Left ventricle myocardium inferior (tissue), 1 donor: ENCODE measurements at regions of chr19 and their contacts with region 1.

Region 1: GRCh38 chr19:39843919-39844793 is 2.0 kb downstream of the FBL start:
- DNase-seq: no peak
- H3K4me3 ChIP-seq: peak overlapping the region; percentile 95
- H3K27ac ChIP-seq: no peak overlapping the region
- H3K4me1 ChIP-seq: peaks cover 59% of the 10 kb centered on the region
- H3K27me3 ChIP-seq: no peaks in the 10 kb centered on the region
- CTCF ChIP-seq: peak; percentile 71

Region 2: GRCh38 chr19:39792999-39793546 is 51.1 kb before region 1 on chr19:
- intact Hi-C with region 1: loop called (anchors 5 kb)
- DNase-seq: peak; percentile 77
- H3K4me3 ChIP-seq: peak overlapping the region; percentile 63
- H3K27ac ChIP-seq: no peak overlapping the region
- H3K4me1 ChIP-seq: no peaks in the 10 kb centered on the region
- H3K27me3 ChIP-seq: peaks cover 21% of the 10 kb centered on the region
- CTCF ChIP-seq: peak; percentile 91

Region 3: DNA sequence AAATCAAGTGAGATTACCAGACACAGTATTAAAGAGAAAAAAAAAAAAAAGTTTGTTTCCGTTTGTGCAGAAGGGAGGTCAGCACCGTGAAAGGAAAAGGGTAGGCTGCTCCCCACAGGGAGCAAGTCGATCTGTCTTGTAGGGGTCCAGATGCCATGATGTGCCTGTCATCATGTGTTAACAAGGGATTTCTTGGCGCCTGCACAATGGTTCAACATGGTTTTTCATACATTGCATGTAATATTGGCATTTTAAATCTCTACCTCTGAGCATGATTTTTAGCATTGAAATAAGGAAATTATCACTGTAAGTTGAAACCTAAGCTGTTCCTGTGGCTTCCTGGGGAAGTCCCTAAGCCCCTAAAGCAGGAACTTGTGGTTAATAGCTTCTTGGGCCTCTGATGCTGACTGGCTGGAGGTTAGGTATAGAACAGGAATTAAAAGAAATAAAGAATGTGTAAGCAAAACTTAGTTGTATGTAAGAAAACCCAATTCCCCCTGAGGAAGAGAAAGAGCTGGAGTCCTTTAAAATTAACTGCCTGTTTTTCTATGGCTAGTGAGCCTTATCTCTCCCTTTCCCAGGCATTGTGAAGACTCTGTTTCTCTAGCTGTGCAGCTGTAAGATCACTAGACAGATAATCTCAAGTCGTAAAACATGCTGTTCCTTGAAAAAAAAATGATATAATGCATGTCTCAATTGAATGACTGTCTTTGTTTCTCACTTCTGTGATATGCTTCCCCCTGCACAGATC is 97.6 kb after region 1 on chr19:
- intact Hi-C with region 1: no loop called
- DNase-seq: no peak
- H3K4me3 ChIP-seq: no peak overlapping the region
- H3K27ac ChIP-seq: peak overlapping the region; percentile 38
- H3K4me1 ChIP-seq: no peaks in the 10 kb centered on the region
- H3K27me3 ChIP-seq: peaks cover 27% of the 10 kb centered on the region
- CTCF ChIP-seq: no peak